ENCODE measurements at regions of chr7 and their contacts with region 1.

Region 1: GRCh38 chr7:121530227-121531174 is 134.4 kb upstream of the FAM3C start:
- DNase-seq: peak; percentile 100
- ATAC-seq: peak; percentile 96
- H3K4me3 ChIP-seq: peak overlapping the region in 1 of 2 experiments; percentile 17; a peak in 2 of 4 replicates
- H3K27ac ChIP-seq: peak overlapping the region; percentile 77
- H3K4me1 ChIP-seq: peaks cover 32 to 48% of the 10 kb centered on the region in 2 experiments
- H3K27me3 ChIP-seq: no peaks in the 10 kb centered on the region
- CTCF ChIP-seq: no peak
- POLR2A ChIP-seq: no peak
- RAD21 ChIP-seq: peak; percentile 54; the same call in 1 of the 2 replicates

Region 2: DNA sequence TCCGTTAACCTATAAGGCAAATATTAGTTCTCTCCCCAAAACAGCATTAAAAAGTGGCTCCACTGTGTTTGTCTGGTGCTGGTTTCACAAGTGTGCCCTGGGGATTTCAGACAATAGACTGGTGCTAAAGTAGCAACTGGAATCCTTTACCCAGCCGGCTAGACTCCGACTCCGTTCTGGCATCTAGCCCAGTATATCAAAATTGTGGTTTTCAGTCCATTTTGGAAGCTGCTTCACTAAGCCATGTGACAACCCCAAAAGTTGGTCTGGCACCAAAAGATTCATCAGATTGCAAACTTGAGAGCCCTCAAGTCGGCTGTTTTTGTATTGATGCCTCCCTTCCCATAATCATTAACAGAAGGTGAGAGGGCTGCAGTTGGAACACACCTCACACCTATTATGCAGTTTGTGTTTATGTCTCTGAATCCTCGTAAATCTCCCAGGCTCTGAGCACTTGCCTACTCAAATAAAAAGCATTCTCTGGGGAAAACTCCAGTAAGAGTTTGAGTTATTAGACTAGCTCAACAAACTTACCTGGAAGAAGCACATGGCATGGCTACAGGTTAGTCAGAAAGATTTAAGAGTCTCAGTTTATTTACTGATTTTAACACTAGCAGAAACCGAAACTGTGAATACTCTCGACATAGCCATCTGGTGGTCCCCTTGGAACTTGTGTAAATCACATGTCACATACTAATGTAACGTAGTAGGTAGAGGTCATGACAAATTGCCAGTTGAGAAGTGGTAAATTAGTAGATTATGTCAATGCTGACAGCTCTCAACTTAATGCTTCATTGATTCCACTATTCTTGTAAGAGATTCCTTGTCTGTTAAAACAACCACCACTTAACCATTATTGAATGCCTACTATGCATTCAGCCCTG is 216.5 kb before region 1 on chr7:
- CTCF ChIA-PET with region 1: no interaction called
- POLR2A ChIA-PET with region 1: no interaction called
- RAD21 ChIA-PET with region 1: no interaction called
- intact Hi-C with region 1: loop called (anchors 5 kb)
- DNase-seq: peak; percentile 88
- ATAC-seq: peak; percentile 80
- H3K4me3 ChIP-seq: peak overlapping the region; percentile 18 to 36
- H3K27ac ChIP-seq: peak overlapping the region; percentile 88
- H3K4me1 ChIP-seq: peaks cover 27 to 35% of the 10 kb centered on the region in 2 experiments
- H3K27me3 ChIP-seq: no peaks in the 10 kb centered on the region
- CTCF ChIP-seq: no peak
- POLR2A ChIP-seq: no peak
- RAD21 ChIP-seq: no peak

Measured in HCT116 (cell line).